T-cell (primary cell): ENCODE measurements at regions of chr3 and their contacts with region 1.

Region 1: GRCh38 chr3:120417272-120417911 is 33.4 kb downstream of the FSTL1 start:
- DNase-seq: peak; percentile 54 to 89 (median 72)
- ATAC-seq: peak; percentile 98
- H3K4me3 ChIP-seq: peak overlapping the region; percentile 39 to 46
- H3K4me3 Mint-ChIP-seq: peak overlapping the region; percentile 67 to 83 (median 81)
- H3K27ac ChIP-seq: no peak overlapping the region
- H3K27ac Mint-ChIP-seq: peak overlapping the region in 1 of 2 donors; percentile 9
- H3K4me1 ChIP-seq: peaks cover 9 to 17% of the 10 kb centered on the region in 2 experiments
- H3K4me1 Mint-ChIP-seq: peaks cover 11 to 19% (median 16%) of the 10 kb centered on the region in 3 donors
- H3K27me3 ChIP-seq: peaks cover 0 to 13% of the 10 kb centered on the region in 2 experiments
- H3K27me3 Mint-ChIP-seq: peaks cover 0 to 5% of the 10 kb centered on the region in 2 donors

Region 2: DNA sequence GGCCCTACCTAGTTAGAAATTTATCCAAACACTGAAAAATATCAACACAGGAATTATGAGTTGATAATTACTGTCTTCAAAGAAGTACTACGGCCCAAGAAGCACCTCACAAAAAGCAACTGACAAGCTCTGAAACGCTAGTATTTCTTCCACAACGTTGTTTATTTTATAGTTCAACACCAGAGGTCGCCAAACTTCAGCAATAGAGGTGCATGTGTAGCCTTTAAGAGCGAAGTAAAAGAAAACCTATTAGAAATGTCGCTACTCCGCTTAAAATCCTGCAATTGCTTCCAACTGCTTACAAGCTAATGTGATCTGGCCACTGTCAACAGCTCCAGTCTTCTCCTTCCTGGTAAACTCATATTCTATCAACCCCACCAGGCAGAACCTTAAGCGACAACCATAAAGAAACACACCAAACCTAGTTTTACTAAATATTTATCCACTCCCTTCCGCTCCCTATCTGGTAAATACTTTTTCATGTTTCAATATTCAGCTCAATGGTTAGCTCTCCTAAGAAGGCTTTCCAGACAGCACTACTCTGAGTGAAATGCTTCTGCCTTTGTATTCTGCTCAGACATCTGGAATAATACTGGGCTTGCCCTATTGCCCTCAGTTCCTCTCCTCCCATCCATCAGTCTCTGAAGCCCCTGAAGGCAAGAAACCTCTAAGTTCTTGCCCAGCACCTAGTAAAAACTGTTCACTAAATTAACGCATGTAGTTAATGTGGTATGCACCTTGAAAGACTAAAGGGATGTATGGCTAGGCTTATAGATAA is 525.3 kb before region 1 on chr3:
- CTCF ChIA-PET with region 1: interaction called, 5 to 21 read pairs
- POLR2A ChIA-PET with region 1: no interaction called
- DNase-seq: peak in 32 of 35 experiments; percentile 1 to 78 (median 22)
- ATAC-seq: peak; percentile 52 to 70 (median 62)
- H3K4me3 ChIP-seq: no peak overlapping the region
- H3K4me3 Mint-ChIP-seq: no peak overlapping the region
- H3K27ac ChIP-seq: no peak overlapping the region
- H3K27ac Mint-ChIP-seq: peak overlapping the region in 1 of 2 donors; percentile 40
- H3K4me1 ChIP-seq: no peaks in the 10 kb centered on the region
- H3K4me1 Mint-ChIP-seq: peaks cover 10 to 23% (median 12%) of the 10 kb centered on the region in 3 donors
- H3K27me3 ChIP-seq: no peaks in the 10 kb centered on the region
- H3K27me3 Mint-ChIP-seq: no peaks in the 10 kb centered on the region

Region 3: GRCh38 chr3:120245386-120245785 is 172.0 kb before region 1 on chr3:
- CTCF ChIA-PET with region 1: interaction called, 33 to 60 read pairs
- POLR2A ChIA-PET with region 1: no interaction called
- DNase-seq: no peak
- ATAC-seq: no peak
- H3K4me3 ChIP-seq: no peak overlapping the region
- H3K4me3 Mint-ChIP-seq: no peak overlapping the region
- H3K27ac ChIP-seq: no peak overlapping the region
- H3K27ac Mint-ChIP-seq: no peak overlapping the region
- H3K4me1 ChIP-seq: no peaks in the 10 kb centered on the region
- H3K4me1 Mint-ChIP-seq: no peaks in the 10 kb centered on the region
- H3K27me3 ChIP-seq: peaks cover 0 to 16% of the 10 kb centered on the region in 2 experiments
- H3K27me3 Mint-ChIP-seq: peaks cover 15 to 20% of the 10 kb centered on the region in 2 donors

Region 4: GRCh38 chr3:120348981-120349818 is 68.2 kb before region 1 on chr3 and contains the start of gene LRRC58:
- CTCF ChIA-PET with region 1: interaction called, 4 to 25 read pairs
- POLR2A ChIA-PET with region 1: interaction called, 3 to 4 read pairs
- DNase-seq: peak; percentile 79 to 95 (median 88)
- ATAC-seq: peak; percentile 90 to 94 (median 92)
- H3K4me3 ChIP-seq: peak within 1 kb of the TSS; percentile 68 to 81
- H3K4me3 Mint-ChIP-seq: peak within 1 kb of the TSS; percentile 88 to 95 (median 95)
- H3K27ac ChIP-seq: peak within 1 kb of the TSS; percentile 60
- H3K27ac Mint-ChIP-seq: peak within 1 kb of the TSS; percentile 92 to 95
- H3K4me1 ChIP-seq: peaks cover 22 to 23% of the 10 kb centered on the region in 2 experiments
- H3K4me1 Mint-ChIP-seq: peaks cover 46 to 47% (median 46%) of the 10 kb centered on the region in 3 donors
- H3K27me3 ChIP-seq: no peaks in the 10 kb centered on the region
- H3K27me3 Mint-ChIP-seq: no peaks in the 10 kb centered on the region
- total RNA-seq, gene LRRC58: 14.4 to 19.2 (median 17.7) TPM

Region 5: DNA sequence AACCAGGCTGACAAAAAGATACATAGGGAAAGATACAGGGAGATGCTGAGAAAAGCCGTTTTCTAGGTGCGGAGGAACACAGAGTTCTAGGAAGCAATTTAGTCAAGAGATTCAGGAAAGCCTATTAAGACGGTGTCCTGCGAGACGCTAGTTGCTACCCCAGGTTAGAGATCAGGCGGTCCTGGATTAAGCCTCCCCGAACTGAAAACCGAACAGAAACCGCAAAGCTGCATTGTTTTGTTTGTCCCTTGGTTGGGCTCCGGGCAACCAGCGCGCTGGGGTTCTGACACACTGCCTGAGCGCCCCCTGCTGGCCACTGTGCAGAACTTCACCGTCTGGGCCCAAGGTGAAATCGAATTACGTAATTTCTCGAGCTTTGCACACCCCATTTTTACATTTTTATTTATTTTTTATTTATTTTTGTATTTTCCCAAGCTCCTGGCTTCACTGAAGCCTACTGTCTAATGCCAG is 141.4 kb after region 1 on chr3:
- CTCF ChIA-PET with region 1: interaction called, 6 to 23 read pairs
- POLR2A ChIA-PET with region 1: interaction called in 1 of 2 experiments, 4 read pairs
- DNase-seq: peak; percentile 72 to 93 (median 86)
- ATAC-seq: peak; percentile 82 to 90 (median 86)
- H3K4me3 ChIP-seq: peak overlapping the region; percentile 48 to 63
- H3K4me3 Mint-ChIP-seq: peak overlapping the region; percentile 70 to 76 (median 74)
- H3K27ac ChIP-seq: no peak overlapping the region
- H3K27ac Mint-ChIP-seq: peak overlapping the region in 1 of 2 donors; percentile 46
- H3K4me1 ChIP-seq: peaks cover 5 to 16% of the 10 kb centered on the region in 2 experiments
- H3K4me1 Mint-ChIP-seq: peaks cover 16 to 25% (median 18%) of the 10 kb centered on the region in 3 donors
- H3K27me3 ChIP-seq: peaks cover 0 to 18% of the 10 kb centered on the region in 2 experiments
- H3K27me3 Mint-ChIP-seq: peaks cover 4 to 11% of the 10 kb centered on the region in 2 donors